K562 (cell line): ENCODE measurements at regions of chr16 and their contacts with region 1.

Region 1: DNA sequence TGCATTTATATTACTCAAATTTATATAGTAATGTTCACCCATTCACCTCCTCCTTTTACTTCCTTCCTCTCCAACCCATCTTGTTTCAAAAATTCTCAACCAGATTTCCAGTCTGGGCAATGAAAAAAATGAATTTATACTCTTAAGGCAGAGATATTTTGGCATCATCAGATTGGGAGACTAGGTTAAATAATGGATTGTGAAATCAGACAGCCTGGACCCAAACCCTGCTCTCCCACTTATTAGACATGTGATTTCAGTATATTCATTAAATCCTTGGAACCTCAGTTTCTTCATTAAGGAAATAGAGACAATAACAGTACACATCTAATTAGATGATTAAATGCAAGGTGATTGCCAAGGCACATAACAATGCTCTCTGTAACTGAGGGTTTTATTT is 7.8 kb downstream of the ACSM1 start:
- DNase-seq: no peak
- ATAC-seq: no peak
- H3K4me3 ChIP-seq: no peak overlapping the region
- H3K27ac ChIP-seq: no peak overlapping the region
- H3K4me1 ChIP-seq: peaks cover 0 to 10% of the 10 kb centered on the region in 2 experiments; a peak in 2 of 5 replicates
- H3K27me3 ChIP-seq: no peaks in the 10 kb centered on the region
- CTCF ChIP-seq: no peak
- EP300 ChIP-seq: no peak
- POLR2A ChIP-seq: no peak
- RAD21 ChIP-seq: no peak

Region 2: DNA sequence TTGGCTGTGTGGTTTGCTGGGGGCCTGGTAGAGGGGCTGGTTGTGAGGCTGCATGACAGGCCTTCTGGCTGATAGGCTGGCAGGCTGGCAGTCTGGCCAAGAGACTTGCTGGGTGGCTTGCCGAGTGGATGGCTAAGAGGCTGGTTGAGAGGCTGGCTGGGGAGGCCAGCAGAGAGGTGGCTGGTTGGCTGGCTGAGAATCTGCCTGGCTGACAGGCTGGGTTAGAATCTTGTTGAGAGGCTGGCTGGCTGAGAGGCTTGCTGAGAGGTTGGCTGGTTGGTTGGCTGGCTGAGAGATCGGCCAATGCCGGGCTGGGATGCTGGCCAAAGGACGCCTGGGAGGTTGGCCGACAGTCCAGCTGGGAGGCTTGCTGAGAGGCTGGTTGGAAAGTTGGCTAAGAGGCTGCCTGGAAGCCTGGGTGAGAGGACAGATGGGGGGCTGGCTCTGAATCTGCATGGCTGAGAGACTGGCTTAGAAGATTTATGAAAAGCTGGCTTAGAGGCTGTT is 77.6 kb before region 1 on chr16:
- CTCF ChIA-PET with region 1: no interaction called
- POLR2A ChIA-PET with region 1: interaction called, 5 read pairs
- in situ Hi-C with region 1: loop called (anchors 5 kb)
- intact Hi-C with region 1: no loop called
- DNase-seq: no peak
- ATAC-seq: 0 out of 3 replicates have a peak, but pooled peaks have one; percentile 14
- H3K4me3 ChIP-seq: no peak overlapping the region
- H3K27ac ChIP-seq: no peak overlapping the region
- H3K4me1 ChIP-seq: peaks cover 0 to 13% of the 10 kb centered on the region in 2 experiments; a peak in 3 of 5 replicates
- H3K27me3 ChIP-seq: peaks cover 13 to 50% of the 10 kb centered on the region in 2 experiments
- CTCF ChIP-seq: no peak
- EP300 ChIP-seq: no peak
- POLR2A ChIP-seq: no peak
- RAD21 ChIP-seq: no peak

Region 3: GRCh38 chr16:20624882-20625807 is 64.5 kb before region 1 on chr16:
- CTCF ChIA-PET with region 1: no interaction called
- POLR2A ChIA-PET with region 1: no interaction called
- in situ Hi-C with region 1: no loop called
- intact Hi-C with region 1: loop called (anchors 5 kb)
- DNase-seq: no peak
- ATAC-seq: peak; percentile 50; the same call in 1 of the 3 replicates
- H3K4me3 ChIP-seq: no peak overlapping the region
- H3K27ac ChIP-seq: no peak overlapping the region
- H3K4me1 ChIP-seq: no peaks in the 10 kb centered on the region
- H3K27me3 ChIP-seq: peaks cover 0 to 24% of the 10 kb centered on the region in 2 experiments; a peak in 2 of 5 replicates
- CTCF ChIP-seq: peak in 1 of 3 experiments; percentile 19; a peak in 2 of 6 replicates
- EP300 ChIP-seq: no peak
- POLR2A ChIP-seq: no peak
- RAD21 ChIP-seq: no peak

Region 4: GRCh38 chr16:20662880-20663279 is 26.8 kb before region 1 on chr16:
- CTCF ChIA-PET with region 1: no interaction called
- POLR2A ChIA-PET with region 1: no interaction called
- in situ Hi-C with region 1: no loop called
- intact Hi-C with region 1: no loop called
- DNase-seq: no peak
- ATAC-seq: no peak
- H3K4me3 ChIP-seq: no peak overlapping the region
- H3K27ac ChIP-seq: no peak overlapping the region
- H3K4me1 ChIP-seq: no peaks in the 10 kb centered on the region
- H3K27me3 ChIP-seq: no peaks in the 10 kb centered on the region
- CTCF ChIP-seq: no peak
- EP300 ChIP-seq: no peak
- POLR2A ChIP-seq: no peak
- RAD21 ChIP-seq: no peak